Activated T-helper 2 cell treated with anti-CD3 and anti-CD28 coated beads, Interferon-gamma antibody, Interleukin-2, Interleukin-4, amounts not matched to agents 10 μg/mL and 5 μg/mL and 100 μg/mL, durations not matched to agents 14 hours and 24 hours and 36 hours (primary cell): ENCODE measurements at regions of chr2 and their contacts with region 1.

Region 1: GRCh38 chr2:197293252-197294007 is 17.1 kb downstream of the ANKRD44 start:
- DNase-seq: no peak
- H3K4me3 Mint-ChIP-seq: peak overlapping the region; percentile 79
- H3K27ac Mint-ChIP-seq: peak overlapping the region; percentile 94
- H3K4me1 Mint-ChIP-seq: peaks cover 80% of the 10 kb centered on the region
- H3K27me3 Mint-ChIP-seq: no peaks in the 10 kb centered on the region

Region 2: GRCh38 chr2:197304556-197305011 is 11.2 kb after region 1 on chr2:
- intact Hi-C with region 1: loop called (anchors 1 kb)
- DNase-seq: no peak
- H3K4me3 Mint-ChIP-seq: peak overlapping the region; percentile 86
- H3K27ac Mint-ChIP-seq: peak overlapping the region; percentile 93
- H3K4me1 Mint-ChIP-seq: peaks cover 82% of the 10 kb centered on the region
- H3K27me3 Mint-ChIP-seq: no peaks in the 10 kb centered on the region

Region 3: GRCh38 chr2:197345846-197346370 is 52.5 kb after region 1 on chr2:
- intact Hi-C with region 1: no loop called
- DNase-seq: no peak
- H3K4me3 Mint-ChIP-seq: no peak overlapping the region
- H3K27ac Mint-ChIP-seq: no peak overlapping the region
- H3K4me1 Mint-ChIP-seq: peaks cover 4% of the 10 kb centered on the region
- H3K27me3 Mint-ChIP-seq: no peaks in the 10 kb centered on the region